ENCODE measurements at regions of chr12 and their contacts with region 1.

Region 1: DNA sequence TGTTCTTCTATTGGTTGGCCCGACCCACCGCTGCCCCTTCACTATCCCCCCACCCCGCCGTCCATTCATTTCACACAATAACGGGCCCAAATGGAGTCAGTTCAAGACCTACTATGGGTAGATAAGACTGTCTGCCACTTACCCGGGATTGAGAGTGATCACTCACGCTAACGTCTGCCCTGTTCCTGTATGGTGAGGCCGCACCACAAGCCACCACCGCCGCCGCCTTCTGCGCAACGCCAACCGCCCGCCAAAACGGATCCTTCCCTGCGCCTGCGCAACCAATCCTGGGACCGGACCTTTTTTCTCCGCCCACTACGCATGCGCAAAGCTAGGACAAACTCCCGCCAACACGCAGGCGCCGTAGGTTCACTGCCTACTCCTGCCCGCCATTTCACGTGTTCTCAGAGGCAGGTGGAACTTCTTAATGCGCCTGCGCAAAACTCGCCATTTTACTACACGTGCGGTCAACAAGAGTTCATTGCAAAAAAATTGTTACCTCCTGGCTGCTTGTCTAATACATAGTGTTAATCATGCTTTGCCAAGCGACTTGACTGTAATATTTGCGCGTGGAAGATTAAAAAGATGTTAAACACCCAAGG is at the start of gene CBX5:
- DNase-seq: peak; percentile 99 to 100 (median 99)
- ATAC-seq: peak; percentile 70 to 82 (median 77)
- H3K4me3 ChIP-seq: peak within 1 kb of the TSS; percentile 61 to 93 (median 79)
- H3K27ac ChIP-seq: peak within 1 kb of the TSS; percentile 82 to 99 (median 94)
- H3K4me1 ChIP-seq: peaks cover 9 to 60% (median 50%) of the 10 kb centered on the region in 12 donors
- H3K27me3 ChIP-seq: no peaks in the 10 kb centered on the region
- CTCF ChIP-seq: no peak
- POLR2A ChIP-seq: no peak
- total RNA-seq, gene CBX5: 22.3 to 59.5 (median 49.4) TPM

Region 2: GRCh38 chr12:54053751-54054741 is 225.9 kb before region 1 on chr12 and contains the start of gene HOXC4:
- intact Hi-C with region 1: no loop called
- DNase-seq: no peak
- ATAC-seq: peak; percentile 26 to 52 (median 37)
- H3K4me3 ChIP-seq: peak within 1 kb of the TSS; percentile 9 to 55 (median 44)
- H3K27ac ChIP-seq: peak within 1 kb of the TSS in 2 of 12 donors; percentile 22 to 24
- H3K4me1 ChIP-seq: peaks cover 0 to 12% (median 1%) of the 10 kb centered on the region in 12 donors
- H3K27me3 ChIP-seq: peaks cover 40 to 98% (median 92%) of the 10 kb centered on the region in 9 donors
- CTCF ChIP-seq: no peak
- POLR2A ChIP-seq: no peak
- total RNA-seq, gene HOXC4: 0.20 to 1.2 (median 0.29) TPM in 3 of 9 donors, not detected in the others

Region 3: GRCh38 chr12:54259194-54260011 is 20.6 kb before region 1 on chr12:
- intact Hi-C with region 1: loop called in 2 of 10 experiments (anchors 2 kb)
- DNase-seq: peak; percentile 79 to 85 (median 85)
- ATAC-seq: peak; percentile 86 to 95 (median 92)
- H3K4me3 ChIP-seq: peak overlapping the region; percentile 12 to 59 (median 51)
- H3K27ac ChIP-seq: peak overlapping the region; percentile 7 to 97 (median 81)
- H3K4me1 ChIP-seq: peaks cover 2 to 64% (median 48%) of the 10 kb centered on the region in 12 donors
- H3K27me3 ChIP-seq: no peaks in the 10 kb centered on the region
- CTCF ChIP-seq: no peak
- POLR2A ChIP-seq: no peak